ENCODE measurements at regions of chr17 and their contacts with region 1.

Region 1: GRCh38 chr17:60135151-60135950 is 14.4 kb upstream of the CA4 start:
- DNase-seq: peak; percentile 18
- H3K4me3 ChIP-seq: peak overlapping the region; percentile 34 to 80 (median 67)
- H3K27ac ChIP-seq: peak overlapping the region; percentile 33 to 85 (median 76)
- H3K4me1 ChIP-seq: peaks cover 15 to 42% (median 20%) of the 10 kb centered on the region in 3 donors
- H3K27me3 ChIP-seq: peaks cover 14 to 40% (median 17%) of the 10 kb centered on the region in 4 donors
- CTCF ChIP-seq: peak in 1 of 6 experiments; percentile 15
- POLR2A ChIP-seq: peak in 2 of 4 donors; percentile 20 to 53

Region 2: DNA sequence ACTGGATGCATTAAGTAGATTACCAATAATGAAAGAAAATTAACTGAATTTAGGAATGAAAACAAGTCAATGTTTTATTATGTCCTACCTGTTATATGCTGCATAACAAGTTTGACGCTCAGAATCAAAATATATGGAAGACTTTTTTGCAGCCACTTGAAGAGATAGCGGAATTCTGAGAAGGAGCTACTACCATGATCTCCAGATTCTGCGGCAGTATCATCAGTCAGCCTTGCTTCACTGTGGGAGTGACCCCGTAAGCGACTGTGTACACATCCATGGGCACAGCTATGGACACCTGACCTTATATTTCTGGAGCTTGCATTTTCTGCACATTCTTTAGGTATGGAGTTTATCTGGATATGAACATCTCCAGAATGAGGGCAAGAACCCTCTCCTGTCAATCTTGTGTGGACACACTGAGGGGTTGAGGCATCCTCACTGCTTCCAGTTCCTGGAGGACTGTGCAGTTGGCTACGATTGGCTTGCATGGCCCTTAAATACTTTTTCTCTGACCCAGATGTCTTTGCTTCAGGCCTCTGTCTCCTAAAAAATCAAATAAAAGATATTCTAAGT is 172.5 kb before region 1 on chr17:
- intact Hi-C with region 1: no loop called
- DNase-seq: no peak
- H3K4me3 ChIP-seq: peak overlapping the region in 1 of 4 donors; percentile 91
- H3K27ac ChIP-seq: no peak overlapping the region
- H3K4me1 ChIP-seq: peaks cover 4 to 24% (median 14%) of the 10 kb centered on the region in 3 donors
- H3K27me3 ChIP-seq: no peaks in the 10 kb centered on the region
- CTCF ChIP-seq: no peak
- POLR2A ChIP-seq: no peak

Region 3: GRCh38 chr17:60435244-60436167 is 300.2 kb after region 1 on chr17:
- intact Hi-C with region 1: loop called (anchors 10 kb)
- DNase-seq: no peak
- H3K4me3 ChIP-seq: peak overlapping the region in 1 of 4 donors; percentile 21
- H3K27ac ChIP-seq: peak overlapping the region in 1 of 4 donors; percentile 3
- H3K4me1 ChIP-seq: peaks cover 0 to 10% (median 0%) of the 10 kb centered on the region in 3 donors
- H3K27me3 ChIP-seq: no peaks in the 10 kb centered on the region
- CTCF ChIP-seq: peak; percentile 65 to 96 (median 90)
- POLR2A ChIP-seq: no peak

Measured in esophagus squamous epithelium (tissue), 5 donors.